ENCODE measurements at regions of chr17 and their contacts with region 1.

Region 1: DNA sequence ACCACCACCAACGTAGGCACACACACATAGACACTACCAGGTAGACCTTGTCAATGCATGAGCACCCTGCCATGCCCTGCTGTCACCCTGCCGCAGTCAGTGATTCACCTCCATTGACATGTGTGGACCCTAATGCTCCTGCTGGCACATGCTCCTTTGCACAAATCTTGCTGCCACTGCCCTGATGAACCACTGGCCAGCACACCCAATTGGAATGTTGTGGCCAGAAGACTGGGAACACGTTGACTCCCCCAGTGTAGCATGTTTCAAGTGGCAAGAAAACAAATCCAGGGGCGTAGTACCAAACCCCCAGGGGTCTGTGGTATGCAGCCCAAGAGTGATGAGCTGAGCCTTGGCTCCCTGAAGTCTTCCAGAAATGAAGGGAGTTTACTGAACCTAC is 486.4 kb upstream of the KIF2B start:
- DNase-seq: no peak
- ATAC-seq: no peak
- H3K4me3 ChIP-seq: no peak overlapping the region
- H3K27ac ChIP-seq: no peak overlapping the region
- H3K4me1 ChIP-seq: no peaks in the 10 kb centered on the region
- H3K27me3 ChIP-seq: no peaks in the 10 kb centered on the region
- CTCF ChIP-seq: no peak
- POLR2A ChIP-seq: no peak

Region 2: GRCh38 chr17:53499277-53499676 is 163.0 kb after region 1 on chr17:
- intact Hi-C with region 1: loop called in 1 of 10 experiments (anchors 10 kb)
- DNase-seq: no peak
- ATAC-seq: no peak
- H3K4me3 ChIP-seq: no peak overlapping the region
- H3K27ac ChIP-seq: no peak overlapping the region
- H3K4me1 ChIP-seq: no peaks in the 10 kb centered on the region
- H3K27me3 ChIP-seq: no peaks in the 10 kb centered on the region
- CTCF ChIP-seq: no peak
- POLR2A ChIP-seq: no peak

Measured in heart left ventricle (tissue), 16 donors.